ENCODE measurements at regions of chr7 and their contacts with region 1.

Region 1: DNA sequence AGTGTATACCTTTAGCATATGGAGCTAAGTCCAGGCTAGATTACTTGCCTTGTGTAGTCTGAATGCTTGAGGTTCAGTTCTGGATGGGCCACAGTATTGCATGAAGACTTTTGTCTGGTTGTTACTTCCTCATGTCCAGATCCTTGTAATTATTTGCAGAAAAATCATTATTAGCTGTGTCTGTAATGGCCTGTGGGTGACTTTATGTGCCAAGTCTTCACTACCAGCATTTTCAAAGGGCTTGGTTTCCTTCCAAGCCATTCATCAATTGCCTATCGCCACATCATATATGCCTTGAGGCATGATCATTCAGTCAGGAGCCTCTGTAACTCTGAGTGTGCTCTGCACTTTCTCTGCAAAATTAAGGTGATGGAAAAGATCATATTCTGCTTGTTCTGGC is 13.8 kb upstream of the HDAC9 start:
- DNase-seq: no peak
- ATAC-seq: no peak
- H3K4me3 ChIP-seq: no peak overlapping the region
- H3K27ac ChIP-seq: no peak overlapping the region
- H3K4me1 ChIP-seq: peaks cover 0 to 14% (median 0%) of the 10 kb centered on the region in 12 donors
- H3K27me3 ChIP-seq: no peaks in the 10 kb centered on the region
- CTCF ChIP-seq: no peak
- POLR2A ChIP-seq: no peak

Region 2: GRCh38 chr7:16636555-16637101 is 1845.1 kb before region 1 on chr7:
- intact Hi-C with region 1: loop called in 1 of 10 experiments (anchors 5 kb)
- DNase-seq: no peak
- ATAC-seq: no peak
- H3K4me3 ChIP-seq: no peak overlapping the region
- H3K27ac ChIP-seq: peak overlapping the region in 7 of 12 donors; percentile 9 to 55 (median 23)
- H3K4me1 ChIP-seq: peaks cover 5 to 66% (median 49%) of the 10 kb centered on the region in 12 donors
- H3K27me3 ChIP-seq: no peaks in the 10 kb centered on the region
- CTCF ChIP-seq: no peak
- POLR2A ChIP-seq: no peak

Region 3: GRCh38 chr7:18541181-18541870 is 59.5 kb after region 1 on chr7:
- intact Hi-C with region 1: no loop called
- DNase-seq: peak; percentile 63 to 79 (median 69)
- ATAC-seq: peak; percentile 83 to 90 (median 86)
- H3K4me3 ChIP-seq: peak overlapping the region in 1 of 12 donors; percentile 5
- H3K27ac ChIP-seq: peak overlapping the region in 10 of 12 donors; percentile 16 to 80 (median 45)
- H3K4me1 ChIP-seq: peaks cover 0 to 41% (median 12%) of the 10 kb centered on the region in 12 donors
- H3K27me3 ChIP-seq: no peaks in the 10 kb centered on the region
- CTCF ChIP-seq: no peak
- POLR2A ChIP-seq: no peak